Left colon (tissue), 2 donors: ENCODE measurements at regions of chr3 and their contacts with region 1.

Region 1: DNA sequence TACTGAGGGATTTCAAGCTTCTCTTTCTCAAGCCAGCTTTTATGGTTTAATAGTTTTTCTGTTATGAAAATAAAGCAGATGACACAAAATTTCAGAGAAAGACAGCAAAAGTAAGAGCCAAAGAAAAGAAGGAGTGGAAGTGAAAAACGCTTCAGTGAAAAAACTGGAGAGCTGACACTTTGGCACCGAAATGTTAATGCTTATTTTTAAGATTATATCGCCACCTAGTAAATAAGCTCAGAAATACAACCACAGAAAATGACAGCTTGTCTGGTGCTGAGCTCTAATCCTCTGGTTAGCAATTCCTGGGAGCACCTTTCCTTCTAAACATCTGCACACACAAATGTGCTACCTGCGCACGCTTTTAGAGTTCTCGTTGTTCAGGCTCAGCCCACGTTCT is 101.6 kb downstream of the ZPLD1 start:
- DNase-seq: no peak
- ATAC-seq: peak; percentile 59

Region 2: DNA sequence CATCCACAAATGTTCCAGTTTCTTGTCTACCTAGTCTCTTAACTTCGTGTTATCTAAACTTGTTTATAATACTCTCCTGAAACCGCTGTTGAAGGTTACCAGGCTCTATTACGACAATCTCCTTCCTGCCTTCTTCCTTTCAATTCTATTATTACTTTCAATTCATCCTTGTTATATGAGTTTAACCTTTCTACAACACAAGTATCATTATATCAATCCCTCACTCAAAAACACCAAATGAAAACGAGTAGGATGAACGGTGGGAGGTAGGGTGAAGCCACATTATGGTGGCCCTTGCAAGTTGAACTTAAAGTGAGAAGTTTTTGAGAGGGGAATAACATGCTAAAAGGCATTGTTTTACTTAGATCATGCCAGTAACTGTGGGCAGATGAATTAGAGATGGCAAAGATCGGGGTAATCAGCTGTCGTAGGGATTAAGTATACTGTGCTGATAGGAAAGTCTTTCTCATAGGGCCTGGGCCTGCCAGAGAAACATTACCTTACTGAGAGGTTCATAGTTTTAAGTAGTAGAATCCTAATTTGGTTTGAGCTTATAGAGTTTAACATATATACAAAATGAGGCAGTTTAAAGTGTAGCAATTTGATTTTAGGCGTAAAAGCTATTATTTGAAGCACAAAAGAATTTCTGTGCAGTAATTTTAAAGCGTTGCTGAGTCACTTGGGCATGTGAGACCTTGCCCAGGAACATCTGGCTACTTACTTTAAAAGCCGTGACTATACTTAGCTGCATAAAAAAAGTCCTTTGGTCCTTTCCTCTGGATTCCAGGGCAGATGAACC is 815.4 kb before region 1 on chr3:
- intact Hi-C with region 1: no loop called
- DNase-seq: no peak
- ATAC-seq: no peak

Region 3: GRCh38 chr3:101803173-101803782 is 733.2 kb before region 1 on chr3:
- intact Hi-C with region 1: loop called in 1 of 2 experiments (anchors 10 kb)
- DNase-seq: peak in 1 of 2 donors; percentile 26
- ATAC-seq: peak; percentile 96

Region 4: GRCh38 chr3:102229062-102229655 is 307.3 kb before region 1 on chr3:
- intact Hi-C with region 1: loop called in 1 of 2 experiments (anchors 5 kb)
- DNase-seq: peak; percentile 39 to 76
- ATAC-seq: peak; percentile 73